ENCODE measurements at regions of chr1 and their contacts with region 1.

Region 1: GRCh38 chr1:109226078-109226445 is 12.3 kb downstream of the SARS1 start:
- H3K4me3 ChIP-seq: no peak overlapping the region
- H3K27ac ChIP-seq: no peak overlapping the region
- H3K4me1 ChIP-seq: no peaks in the 10 kb centered on the region
- CTCF ChIP-seq: no peak

Region 2: DNA sequence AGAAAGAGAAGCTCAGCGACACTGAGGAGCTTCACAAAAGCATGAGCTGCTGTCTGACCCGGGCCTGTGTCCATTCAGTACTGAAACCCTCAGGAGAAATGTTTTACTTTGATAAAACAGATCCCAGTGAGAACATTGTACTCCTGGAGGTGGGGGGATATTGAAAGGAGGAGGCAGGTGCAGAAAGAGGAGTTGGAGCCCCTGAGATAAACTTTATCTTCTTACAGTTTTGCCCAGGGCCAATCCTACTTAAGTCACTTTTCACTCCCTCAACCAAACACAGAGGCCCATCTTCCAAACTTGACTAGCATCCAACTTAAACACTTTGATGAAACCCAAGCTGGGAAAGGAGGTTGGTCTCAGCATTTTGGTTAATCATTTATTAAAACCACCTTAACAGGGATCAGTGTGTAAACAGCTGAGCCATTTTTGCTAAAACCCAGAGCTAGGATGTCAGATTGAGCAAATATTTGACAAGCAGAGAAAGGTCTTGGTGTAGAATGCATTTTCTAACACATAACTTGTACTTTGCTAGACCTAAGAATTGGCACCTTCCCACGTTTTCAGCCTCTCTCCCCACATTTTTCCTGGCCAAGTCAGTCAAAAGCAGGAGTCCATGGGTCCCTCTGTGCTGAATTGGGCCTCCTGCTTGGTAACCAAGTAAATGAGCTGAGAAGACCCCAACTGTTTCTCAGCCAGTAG is 44.8 kb before region 1 on chr1:
- CTCF ChIA-PET with region 1: no interaction called
- POLR2A ChIA-PET with region 1: no interaction called
- H3K4me3 ChIP-seq: no peak overlapping the region
- H3K27ac ChIP-seq: peak overlapping the region; percentile 46; the same call in 1 of the 2 replicates
- H3K4me1 ChIP-seq: peaks cover 3% of the 10 kb centered on the region
- CTCF ChIP-seq: no peak

Region 3: DNA sequence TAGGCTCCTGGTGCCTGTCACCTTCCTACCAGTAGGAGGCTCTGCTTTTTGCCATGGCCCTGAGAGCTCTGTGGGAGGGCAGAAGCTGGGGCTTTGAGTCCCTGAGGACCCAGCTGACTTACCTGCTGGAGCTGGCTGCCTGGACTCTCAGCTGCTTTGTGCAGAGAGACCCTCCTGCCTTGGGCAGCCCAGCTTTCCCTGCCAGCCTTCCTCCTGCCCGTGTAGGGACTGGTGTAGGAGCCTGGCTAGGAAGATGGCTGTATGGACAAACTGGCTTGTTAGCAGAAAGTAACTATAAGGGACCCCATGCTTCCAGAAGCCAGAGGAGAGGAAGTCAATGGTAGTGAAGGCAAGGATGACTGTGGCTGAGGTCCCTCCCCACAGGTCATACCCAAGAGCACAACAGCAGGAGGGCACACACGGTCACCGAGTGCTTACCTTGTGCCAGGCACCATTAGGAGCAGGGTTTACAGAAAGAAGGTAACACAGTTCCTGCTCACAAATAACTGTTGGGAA is 13.6 kb after region 1 on chr1:
- CTCF ChIA-PET with region 1: interaction called, 14 read pairs
- POLR2A ChIA-PET with region 1: no interaction called
- H3K4me3 ChIP-seq: no peak overlapping the region
- H3K27ac ChIP-seq: 0 out of 2 replicates have a peak overlapping the region, but pooled peaks have one; percentile 1
- H3K4me1 ChIP-seq: no peaks in the 10 kb centered on the region
- CTCF ChIP-seq: peak; percentile 47; the same call in 1 of the 2 replicates